Caco-2 (cell line): ENCODE measurements at regions of chr12 and their contacts with region 1.

Region 1: DNA sequence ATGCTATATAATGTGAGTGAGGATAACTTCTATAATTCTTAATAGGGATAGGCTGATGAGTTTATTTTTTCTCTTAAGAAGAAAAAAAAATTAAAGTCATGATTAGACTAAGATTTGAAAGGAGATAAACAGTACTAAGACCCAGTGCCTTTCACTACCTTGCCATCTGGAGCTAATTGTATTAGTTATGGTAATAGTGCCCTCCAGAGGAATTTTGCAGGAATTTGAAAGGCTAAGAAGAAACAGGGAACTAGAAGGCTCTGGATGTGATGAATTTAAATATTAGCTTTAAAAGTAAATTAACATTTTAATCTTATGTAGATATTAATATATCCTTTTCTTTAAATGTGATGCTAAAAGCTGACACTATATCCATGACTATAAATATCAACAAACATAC is 36.6 kb upstream of the PIK3C2G start:
- DNase-seq: peak in 1 of 2 experiments; percentile 15
- H3K4me3 ChIP-seq: no peak overlapping the region
- H3K4me3 Mint-ChIP-seq: no peak overlapping the region
- H3K27ac Mint-ChIP-seq: no peak overlapping the region
- H3K4me1 ChIP-seq: no peaks in the 10 kb centered on the region
- H3K4me1 Mint-ChIP-seq: no peaks in the 10 kb centered on the region
- H3K27me3 ChIP-seq: no peaks in the 10 kb centered on the region
- H3K27me3 Mint-ChIP-seq: peaks cover 3% of the 10 kb centered on the region
- CTCF ChIP-seq: peak; percentile 47 to 54

Region 2: DNA sequence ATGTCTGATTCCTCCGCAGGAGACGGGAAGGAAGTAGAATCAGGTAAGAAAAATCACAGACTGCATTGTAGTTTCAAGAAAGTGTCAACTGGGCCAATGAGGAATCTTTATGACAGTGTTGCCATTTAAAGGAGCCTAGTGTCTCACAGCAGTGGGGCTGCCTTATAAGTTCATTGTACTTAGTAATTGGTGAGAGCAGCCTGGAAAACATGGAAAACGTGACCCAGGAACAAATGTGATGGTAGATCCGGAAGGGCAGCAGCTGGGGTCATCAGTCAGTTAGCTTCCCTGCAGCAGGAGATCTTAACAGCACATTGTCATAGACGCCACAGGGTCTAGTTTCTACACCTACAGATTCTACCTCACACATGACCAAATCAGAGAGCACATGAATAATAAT is 988.7 kb before region 1 on chr12:
- CTCF ChIA-PET with region 1: no interaction called
- POLR2A ChIA-PET with region 1: no interaction called
- intact Hi-C with region 1: no loop called
- DNase-seq: no peak
- H3K4me3 ChIP-seq: no peak overlapping the region
- H3K4me3 Mint-ChIP-seq: no peak overlapping the region
- H3K27ac Mint-ChIP-seq: no peak overlapping the region
- H3K4me1 ChIP-seq: no peaks in the 10 kb centered on the region
- H3K4me1 Mint-ChIP-seq: no peaks in the 10 kb centered on the region
- H3K27me3 ChIP-seq: no peaks in the 10 kb centered on the region; the same call in 1 of the 2 replicates
- H3K27me3 Mint-ChIP-seq: peaks cover 7% of the 10 kb centered on the region
- CTCF ChIP-seq: no peak

Region 3: GRCh38 chr12:17875230-17875629 is 349.5 kb before region 1 on chr12:
- CTCF ChIA-PET with region 1: no interaction called
- POLR2A ChIA-PET with region 1: no interaction called
- intact Hi-C with region 1: no loop called
- DNase-seq: no peak
- H3K4me3 ChIP-seq: no peak overlapping the region
- H3K4me3 Mint-ChIP-seq: no peak overlapping the region
- H3K27ac Mint-ChIP-seq: no peak overlapping the region
- H3K4me1 ChIP-seq: no peaks in the 10 kb centered on the region
- H3K4me1 Mint-ChIP-seq: no peaks in the 10 kb centered on the region
- H3K27me3 ChIP-seq: no peaks in the 10 kb centered on the region
- H3K27me3 Mint-ChIP-seq: peaks cover 3% of the 10 kb centered on the region
- CTCF ChIP-seq: no peak

Region 4: GRCh38 chr12:18158774-18159557 is 65.8 kb before region 1 on chr12:
- CTCF ChIA-PET with region 1: interaction called, 3 read pairs
- POLR2A ChIA-PET with region 1: no interaction called
- intact Hi-C with region 1: loop called (anchors 1 kb)
- DNase-seq: peak in 1 of 2 experiments; percentile 70
- H3K4me3 ChIP-seq: no peak overlapping the region
- H3K4me3 Mint-ChIP-seq: no peak overlapping the region
- H3K27ac Mint-ChIP-seq: no peak overlapping the region
- H3K4me1 ChIP-seq: no peaks in the 10 kb centered on the region
- H3K4me1 Mint-ChIP-seq: no peaks in the 10 kb centered on the region
- H3K27me3 ChIP-seq: no peaks in the 10 kb centered on the region
- H3K27me3 Mint-ChIP-seq: no peaks in the 10 kb centered on the region
- CTCF ChIP-seq: peak; percentile 90 to 95